Right ventricle myocardium inferior (tissue), 1 donor: ENCODE measurements at regions of chr11 and their contacts with region 1.

Region 1: GRCh38 chr11:17722000-17722643 is 2.8 kb downstream of the MYOD1 start:
- DNase-seq: no peak
- ATAC-seq: no peak

Region 2: GRCh38 chr11:16558494-16558893 is 1163.6 kb before region 1 on chr11:
- intact Hi-C with region 1: no loop called
- DNase-seq: no peak
- ATAC-seq: no peak

Region 3: GRCh38 chr11:17473071-17473744 is 248.9 kb before region 1 on chr11:
- intact Hi-C with region 1: no loop called
- DNase-seq: no peak
- ATAC-seq: no peak

Region 4: GRCh38 chr11:17598700-17599459 is 123.2 kb before region 1 on chr11:
- intact Hi-C with region 1: loop called (anchors 2 kb)
- DNase-seq: no peak
- ATAC-seq: peak; percentile 71